ENCODE measurements at regions of chr2 and their contacts with region 1.

Region 1: DNA sequence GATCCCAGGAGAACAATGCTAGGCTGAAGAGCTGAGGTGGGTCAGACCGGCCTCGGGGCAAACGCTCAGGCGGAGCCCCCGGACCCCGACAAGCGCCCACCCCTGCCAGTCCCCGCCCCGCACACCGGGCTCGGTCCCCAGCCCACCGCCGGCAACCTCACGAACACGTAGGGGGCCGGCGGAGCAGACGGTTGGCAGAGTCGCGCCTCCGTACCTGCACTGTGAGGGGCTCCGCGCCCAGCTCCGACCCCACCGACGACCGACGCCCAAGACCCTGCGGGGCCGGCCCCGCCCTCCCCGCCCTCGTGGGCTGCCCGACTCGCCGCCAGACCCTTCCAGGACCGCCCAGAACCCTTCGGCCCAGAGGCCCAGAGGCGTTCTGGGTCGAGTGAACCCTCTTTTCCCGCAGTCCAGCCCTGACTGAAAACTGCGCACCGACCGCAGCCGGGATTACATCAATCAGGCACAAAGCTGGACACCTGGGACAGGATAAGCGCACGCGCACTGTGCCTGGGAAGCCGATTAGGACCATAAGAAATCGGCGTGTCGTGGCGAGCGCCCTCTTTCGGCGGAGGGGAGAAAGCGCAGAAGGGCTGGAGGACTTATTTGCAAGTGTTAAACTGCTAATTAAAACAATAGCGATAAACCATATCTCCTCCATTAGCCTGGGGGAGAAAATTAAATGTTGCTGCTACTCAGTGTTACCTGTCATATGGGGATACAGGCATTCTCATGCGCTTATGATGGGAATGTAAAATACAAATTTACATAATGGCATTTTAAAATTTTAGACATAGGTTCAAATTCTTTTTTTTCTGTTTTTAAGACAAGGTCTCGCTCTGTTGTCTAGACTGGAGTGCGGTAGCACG is 11.7 kb upstream of the DCTN1 start:
- DNase-seq: peak; percentile 96
- ATAC-seq: peak; percentile 82
- H3K4me3 Mint-ChIP-seq: peak overlapping the region; percentile 86
- H3K27ac Mint-ChIP-seq: peak overlapping the region; percentile 97
- H3K4me1 Mint-ChIP-seq: peaks cover 6% of the 10 kb centered on the region
- H3K27me3 Mint-ChIP-seq: peaks cover 8% of the 10 kb centered on the region

Region 2: DNA sequence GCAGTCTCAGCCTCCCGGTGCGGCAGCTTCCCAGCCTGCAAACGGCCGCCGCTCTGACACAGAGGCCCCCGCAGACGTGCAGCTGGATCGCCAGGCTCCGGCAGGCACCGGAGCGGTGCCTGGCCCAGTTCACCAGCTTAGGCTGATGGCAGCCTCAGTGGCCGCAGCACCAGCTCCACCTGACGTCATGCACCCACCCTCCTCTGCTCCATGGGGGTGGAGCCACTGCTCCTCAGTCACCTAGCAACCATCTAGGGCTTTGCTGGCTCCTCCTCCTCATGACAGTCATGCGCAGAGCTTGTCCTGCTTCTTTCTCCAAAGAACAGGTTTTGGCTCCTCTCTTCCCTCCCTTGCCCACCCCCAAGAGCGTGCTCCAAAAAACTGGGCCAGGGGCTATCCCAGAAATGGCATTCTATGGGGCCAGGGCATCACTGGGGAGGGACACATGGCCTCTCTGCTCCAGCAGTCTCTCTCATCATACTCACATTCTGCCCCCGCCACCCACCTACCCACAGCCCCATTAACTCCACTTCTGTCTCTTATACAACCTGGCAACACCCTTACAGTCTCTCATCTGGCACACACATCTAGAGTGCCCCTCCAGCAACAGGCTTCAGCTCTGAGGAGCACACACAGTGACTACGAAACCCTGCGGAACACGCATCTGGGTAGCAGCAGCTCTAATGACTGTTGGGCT is 17.2 kb before region 1 on chr2:
- CTCF ChIA-PET with region 1: interaction called, 11 read pairs
- DNase-seq: no peak
- ATAC-seq: no peak
- H3K4me3 Mint-ChIP-seq: no peak overlapping the region
- H3K27ac Mint-ChIP-seq: no peak overlapping the region
- H3K4me1 Mint-ChIP-seq: peaks cover 12% of the 10 kb centered on the region
- H3K27me3 Mint-ChIP-seq: no peaks in the 10 kb centered on the region

Region 3: GRCh38 chr2:74381751-74382150 is 10.1 kb before region 1 on chr2:
- CTCF ChIA-PET with region 1: interaction called, 12 read pairs
- DNase-seq: no peak
- ATAC-seq: no peak
- H3K4me3 Mint-ChIP-seq: no peak overlapping the region
- H3K27ac Mint-ChIP-seq: no peak overlapping the region
- H3K4me1 Mint-ChIP-seq: peaks cover 19% of the 10 kb centered on the region
- H3K27me3 Mint-ChIP-seq: no peaks in the 10 kb centered on the region

Region 4: DNA sequence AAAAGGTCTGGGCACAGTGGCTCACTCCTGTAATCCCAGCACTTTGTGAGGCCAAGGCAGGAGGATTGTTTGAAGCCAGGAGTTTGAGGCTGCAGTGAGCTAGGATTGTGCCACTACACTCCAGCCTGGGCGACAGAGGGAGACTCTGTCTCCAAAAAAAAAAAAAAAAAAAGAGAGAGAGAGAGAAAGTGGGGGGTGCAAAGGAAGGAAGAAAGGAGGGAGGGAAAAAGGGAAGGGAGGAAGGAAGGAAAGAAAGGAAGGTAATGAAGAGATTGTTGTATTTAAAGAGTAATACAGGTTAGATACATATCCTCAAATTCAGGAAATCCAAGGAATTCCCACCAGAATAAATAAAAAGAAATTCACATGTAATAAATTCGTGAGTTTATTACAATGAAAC is 10.1 kb after region 1 on chr2:
- CTCF ChIA-PET with region 1: interaction called, 10 read pairs
- DNase-seq: no peak
- ATAC-seq: no peak
- H3K4me3 Mint-ChIP-seq: no peak overlapping the region
- H3K27ac Mint-ChIP-seq: no peak overlapping the region
- H3K4me1 Mint-ChIP-seq: no peaks in the 10 kb centered on the region
- H3K27me3 Mint-ChIP-seq: peaks cover 15% of the 10 kb centered on the region